ENCODE measurements at regions of chr12 and their contacts with region 1.

Region 1: GRCh38 chr12:102740141-102740955 is 176.7 kb downstream of the PAH start:
- DNase-seq: no peak
- H3K4me3 Mint-ChIP-seq: no peak overlapping the region
- H3K27ac Mint-ChIP-seq: no peak overlapping the region
- H3K4me1 Mint-ChIP-seq: no peaks in the 10 kb centered on the region
- H3K27me3 Mint-ChIP-seq: no peaks in the 10 kb centered on the region

Region 2: DNA sequence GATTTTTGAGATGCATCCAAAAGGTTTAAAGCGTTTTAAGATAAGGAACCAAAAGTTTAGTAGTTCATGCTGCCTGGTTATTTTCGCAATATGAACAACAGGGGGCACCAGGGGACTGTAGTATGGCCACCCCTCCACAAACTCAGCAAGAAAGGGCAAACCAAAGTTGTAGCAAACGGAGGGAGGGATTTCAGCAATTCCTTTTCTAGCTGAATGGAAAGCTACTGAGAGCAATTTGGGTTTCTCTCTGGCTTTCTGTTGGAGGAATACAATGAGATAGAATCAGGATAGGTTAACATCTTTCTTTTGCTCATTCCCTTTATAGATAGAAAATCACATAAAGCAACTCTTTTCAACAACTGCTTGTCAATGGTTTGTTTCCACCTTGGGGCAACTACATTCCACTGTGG is 800.5 kb before region 1 on chr12:
- CTCF ChIA-PET with region 1: interaction called, 14 read pairs
- DNase-seq: peak; percentile 70
- H3K4me3 Mint-ChIP-seq: no peak overlapping the region
- H3K27ac Mint-ChIP-seq: no peak overlapping the region
- H3K4me1 Mint-ChIP-seq: no peaks in the 10 kb centered on the region
- H3K27me3 Mint-ChIP-seq: peaks cover 32% of the 10 kb centered on the region

Region 3: GRCh38 chr12:102669036-102669435 is 71.3 kb before region 1 on chr12:
- CTCF ChIA-PET with region 1: no interaction called
- DNase-seq: no peak
- H3K4me3 Mint-ChIP-seq: no peak overlapping the region
- H3K27ac Mint-ChIP-seq: no peak overlapping the region
- H3K4me1 Mint-ChIP-seq: no peaks in the 10 kb centered on the region
- H3K27me3 Mint-ChIP-seq: no peaks in the 10 kb centered on the region

Measured in activated naive CD4-positive, alpha-beta T cell treated with anti-CD3 and anti-CD28 coated beads, Interleukin-2, amount 10 ng/mL, durations not matched to agents 7 days and 5 days (primary cell).